CD14-positive monocyte (primary cell): ENCODE measurements at regions of chrX and their contacts with region 1.

Region 1: DNA sequence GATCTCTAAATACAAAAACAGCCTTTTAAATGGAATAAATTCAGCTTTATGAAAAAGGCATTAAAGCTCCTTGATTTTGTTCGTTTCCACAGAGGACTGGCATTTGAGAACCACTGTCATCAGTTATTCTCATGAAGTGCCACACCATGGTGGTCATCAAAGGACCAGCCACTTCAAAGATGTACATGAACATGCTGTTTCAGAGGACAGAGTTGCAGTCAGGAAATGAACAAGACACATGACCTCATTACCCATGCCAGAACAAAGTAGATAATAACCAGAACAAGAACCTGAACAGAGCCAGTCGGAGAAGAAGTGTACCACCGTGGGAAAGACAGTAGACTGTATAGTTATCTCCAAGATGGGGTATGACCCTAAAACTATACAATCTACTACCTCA is 122.7 kb upstream of the HSD17B10 start:
- DNase-seq: no peak
- H3K4me3 ChIP-seq: no peak overlapping the region
- H3K4me3 Mint-ChIP-seq: no peak overlapping the region
- H3K27ac ChIP-seq: no peak overlapping the region
- H3K27ac Mint-ChIP-seq: no peak overlapping the region
- H3K4me1 ChIP-seq: no peaks in the 10 kb centered on the region
- H3K4me1 Mint-ChIP-seq: no peaks in the 10 kb centered on the region
- H3K27me3 ChIP-seq: no peaks in the 10 kb centered on the region
- H3K27me3 Mint-ChIP-seq: peaks cover 0 to 3% (median 0%) of the 10 kb centered on the region in 3 donors
- CTCF ChIP-seq: no peak

Region 2: GRCh38 chrX:53511322-53511721 is 45.5 kb before region 1 on chrX:
- intact Hi-C with region 1: no loop called
- DNase-seq: peak; percentile 8 to 39 (median 11)
- H3K4me3 ChIP-seq: no peak overlapping the region
- H3K4me3 Mint-ChIP-seq: no peak overlapping the region
- H3K27ac ChIP-seq: no peak overlapping the region
- H3K27ac Mint-ChIP-seq: peak overlapping the region in 2 of 7 donors; percentile 46 to 59
- H3K4me1 ChIP-seq: no peaks in the 10 kb centered on the region
- H3K4me1 Mint-ChIP-seq: peaks cover 11% of the 10 kb centered on the region
- H3K27me3 ChIP-seq: no peaks in the 10 kb centered on the region
- H3K27me3 Mint-ChIP-seq: peaks cover 0 to 8% (median 1%) of the 10 kb centered on the region in 3 donors
- CTCF ChIP-seq: no peak

Region 3: GRCh38 chrX:53599781-53600396 is 43.0 kb after region 1 on chrX:
- intact Hi-C with region 1: loop called in 1 of 2 experiments (anchors 10 kb)
- DNase-seq: no peak
- H3K4me3 ChIP-seq: no peak overlapping the region
- H3K4me3 Mint-ChIP-seq: no peak overlapping the region
- H3K27ac ChIP-seq: no peak overlapping the region
- H3K27ac Mint-ChIP-seq: no peak overlapping the region
- H3K4me1 ChIP-seq: peaks cover 6 to 7% of the 10 kb centered on the region in 2 donors
- H3K4me1 Mint-ChIP-seq: peaks cover 8% of the 10 kb centered on the region
- H3K27me3 ChIP-seq: peaks cover 0 to 5% of the 10 kb centered on the region in 2 donors
- H3K27me3 Mint-ChIP-seq: peaks cover 0 to 11% (median 0%) of the 10 kb centered on the region in 3 donors
- CTCF ChIP-seq: no peak

Region 4: GRCh38 chrX:53990171-53990570 is 433.3 kb after region 1 on chrX:
- intact Hi-C with region 1: loop called in 1 of 2 experiments (anchors 10 kb)
- DNase-seq: no peak
- H3K4me3 ChIP-seq: no peak overlapping the region
- H3K4me3 Mint-ChIP-seq: no peak overlapping the region
- H3K27ac ChIP-seq: no peak overlapping the region
- H3K27ac Mint-ChIP-seq: no peak overlapping the region
- H3K4me1 ChIP-seq: no peaks in the 10 kb centered on the region
- H3K4me1 Mint-ChIP-seq: no peaks in the 10 kb centered on the region
- H3K27me3 ChIP-seq: no peaks in the 10 kb centered on the region
- H3K27me3 Mint-ChIP-seq: peaks cover 0 to 1% (median 0%) of the 10 kb centered on the region in 3 donors
- CTCF ChIP-seq: no peak